B cell (primary cell): ENCODE measurements at regions of chr3 and their contacts with region 1.

Region 1: GRCh38 chr3:179653096-179653797 is 407 bp downstream of the USP13 start:
- DNase-seq: peak; percentile 78
- ATAC-seq: peak; percentile 41
- H3K4me3 ChIP-seq: peak overlapping the region; percentile 41 to 88 (median 80)
- H3K4me3 Mint-ChIP-seq: peak overlapping the region; percentile 96
- H3K27ac ChIP-seq: peak overlapping the region; percentile 21 to 36
- H3K27ac Mint-ChIP-seq: peak overlapping the region; percentile 91
- H3K4me1 ChIP-seq: peaks cover 10 to 19% of the 10 kb centered on the region in 2 donors
- H3K4me1 Mint-ChIP-seq: peaks cover 29% of the 10 kb centered on the region
- H3K27me3 ChIP-seq: no peaks in the 10 kb centered on the region
- H3K27me3 Mint-ChIP-seq: no peaks in the 10 kb centered on the region
- CTCF ChIP-seq: no peak

Region 2: GRCh38 chr3:179260949-179261765 is 392.1 kb before region 1 on chr3:
- CTCF ChIA-PET with region 1: no interaction called
- POLR2A ChIA-PET with region 1: no interaction called
- intact Hi-C with region 1: loop called (anchors 2 kb)
- DNase-seq: peak; percentile 78
- ATAC-seq: peak; percentile 92
- H3K4me3 ChIP-seq: peak overlapping the region; percentile 48 to 77 (median 67)
- H3K4me3 Mint-ChIP-seq: peak overlapping the region; percentile 89
- H3K27ac ChIP-seq: peak overlapping the region in 1 of 2 donors; percentile 66
- H3K27ac Mint-ChIP-seq: peak overlapping the region; percentile 84
- H3K4me1 ChIP-seq: peaks cover 15 to 23% of the 10 kb centered on the region in 2 donors
- H3K4me1 Mint-ChIP-seq: peaks cover 52% of the 10 kb centered on the region
- H3K27me3 ChIP-seq: no peaks in the 10 kb centered on the region
- H3K27me3 Mint-ChIP-seq: no peaks in the 10 kb centered on the region
- CTCF ChIP-seq: no peak

Region 3: GRCh38 chr3:179562591-179563270 is 90.5 kb before region 1 on chr3 and contains the start of gene ACTL6A:
- CTCF ChIA-PET with region 1: interaction called, 7 read pairs
- POLR2A ChIA-PET with region 1: no interaction called
- intact Hi-C with region 1: loop called (anchors 2 kb)
- DNase-seq: peak; percentile 98
- ATAC-seq: peak; percentile 90
- H3K4me3 ChIP-seq: peak within 1 kb of the TSS; percentile 55 to 87 (median 83)
- H3K4me3 Mint-ChIP-seq: peak within 1 kb of the TSS; percentile 98
- H3K27ac ChIP-seq: peak within 1 kb of the TSS; percentile 58 to 73
- H3K27ac Mint-ChIP-seq: peak within 1 kb of the TSS; percentile 94
- H3K4me1 ChIP-seq: peaks cover 9% of the 10 kb centered on the region in 2 donors
- H3K4me1 Mint-ChIP-seq: peaks cover 26% of the 10 kb centered on the region
- H3K27me3 ChIP-seq: no peaks in the 10 kb centered on the region
- H3K27me3 Mint-ChIP-seq: no peaks in the 10 kb centered on the region
- CTCF ChIP-seq: no peak
- total RNA-seq, gene ACTL6A: 48.5 and 55.1 TPM in 2 replicates

Region 4: DNA sequence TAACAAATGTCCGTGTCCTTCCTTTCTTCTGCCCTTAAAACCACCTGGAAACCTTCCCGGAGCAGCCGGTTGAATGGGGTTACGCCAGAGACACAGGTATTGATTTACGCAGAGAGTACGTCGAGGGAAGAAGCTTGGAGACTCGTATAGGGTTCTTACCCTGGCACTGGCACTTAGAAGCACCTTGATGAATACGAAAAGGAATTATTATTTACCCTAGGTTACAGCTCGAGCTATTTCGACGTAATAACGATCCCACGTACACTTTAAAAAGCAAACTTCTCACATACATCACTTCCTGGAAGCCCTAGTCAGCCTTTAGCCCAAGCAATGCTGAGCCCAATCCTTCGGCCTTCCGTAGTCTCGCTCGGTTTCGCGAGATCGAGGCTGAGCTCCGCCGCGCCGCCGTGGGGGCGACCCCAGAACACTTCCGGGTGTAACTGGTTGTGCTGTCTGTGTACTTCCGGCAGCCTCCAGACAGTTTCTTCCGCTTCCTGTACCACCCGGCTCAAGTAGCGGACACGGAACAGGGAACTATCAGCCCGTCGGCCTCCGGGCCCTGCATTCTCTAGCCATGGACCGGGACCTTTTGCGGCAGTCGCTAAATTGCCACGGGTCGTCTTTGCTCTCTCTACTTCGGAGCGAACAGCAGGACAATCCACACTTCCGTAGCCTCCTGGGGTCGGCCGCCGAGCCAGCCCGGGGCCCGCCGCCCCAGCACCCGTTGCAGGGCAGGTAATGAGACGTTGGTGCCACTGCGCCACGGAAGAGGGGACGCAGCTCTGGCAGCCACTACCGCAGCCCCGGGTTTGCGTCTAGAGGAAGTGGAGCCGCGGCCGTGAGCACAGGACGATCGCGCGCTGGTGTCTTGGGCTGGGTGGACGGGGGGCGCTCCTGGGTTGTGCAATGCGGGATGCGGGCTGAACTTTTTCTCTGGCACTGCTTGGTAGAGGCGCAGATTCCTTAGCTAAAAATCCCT is 948.7 kb after region 1 on chr3 and contains the start of gene TTC14:
- CTCF ChIA-PET with region 1: no interaction called
- POLR2A ChIA-PET with region 1: interaction called, 7 read pairs
- intact Hi-C with region 1: loop called (anchors 2 kb)
- DNase-seq: peak; percentile 96
- ATAC-seq: peak; percentile 88
- H3K4me3 ChIP-seq: peak within 1 kb of the TSS; percentile 75 to 86 (median 80)
- H3K4me3 Mint-ChIP-seq: peak within 1 kb of the TSS; percentile 93
- H3K27ac ChIP-seq: peak within 1 kb of the TSS; percentile 88 to 90
- H3K27ac Mint-ChIP-seq: peak within 1 kb of the TSS; percentile 98
- H3K4me1 ChIP-seq: peaks cover 12 to 17% of the 10 kb centered on the region in 2 donors
- H3K4me1 Mint-ChIP-seq: peaks cover 25% of the 10 kb centered on the region
- H3K27me3 ChIP-seq: peaks cover 0 to 4% (median 0%) of the 10 kb centered on the region in 4 experiments
- H3K27me3 Mint-ChIP-seq: peaks cover 24% of the 10 kb centered on the region
- CTCF ChIP-seq: no peak
- total RNA-seq, gene TTC14: 136 and 139 TPM in 2 replicates

Region 5: GRCh38 chr3:180989291-180990163 is 1336.3 kb after region 1 on chr3 and contains the start of gene DNAJC19:
- CTCF ChIA-PET with region 1: no interaction called
- POLR2A ChIA-PET with region 1: no interaction called
- intact Hi-C with region 1: loop called (anchors 2 kb)
- DNase-seq: peak; percentile 95
- ATAC-seq: peak; percentile 97
- H3K4me3 ChIP-seq: peak within 1 kb of the TSS; percentile 75 to 99 (median 85)
- H3K4me3 Mint-ChIP-seq: peak within 1 kb of the TSS; percentile 96
- H3K27ac ChIP-seq: peak within 1 kb of the TSS; percentile 80
- H3K27ac Mint-ChIP-seq: peak within 1 kb of the TSS; percentile 97
- H3K4me1 ChIP-seq: peaks cover 15 to 17% of the 10 kb centered on the region in 2 donors
- H3K4me1 Mint-ChIP-seq: peaks cover 37% of the 10 kb centered on the region
- H3K27me3 ChIP-seq: no peaks in the 10 kb centered on the region
- H3K27me3 Mint-ChIP-seq: peaks cover 10% of the 10 kb centered on the region
- CTCF ChIP-seq: no peak
- total RNA-seq, gene DNAJC19: 48.9 and 50.3 TPM in 2 replicates